A673 (cell line): ENCODE measurements at regions of chrX and their contacts with region 1.

Region 1: GRCh38 chrX:1380672-1381233 is 11.2 kb downstream of the SLC25A6 start:
- DNase-seq: peak; percentile 51
- H3K4me3 ChIP-seq: no peak overlapping the region
- H3K27ac ChIP-seq: no peak overlapping the region
- H3K4me1 ChIP-seq: no peaks in the 10 kb centered on the region
- H3K27me3 ChIP-seq: no peaks in the 10 kb centered on the region
- CTCF ChIP-seq: no peak

Region 2: DNA sequence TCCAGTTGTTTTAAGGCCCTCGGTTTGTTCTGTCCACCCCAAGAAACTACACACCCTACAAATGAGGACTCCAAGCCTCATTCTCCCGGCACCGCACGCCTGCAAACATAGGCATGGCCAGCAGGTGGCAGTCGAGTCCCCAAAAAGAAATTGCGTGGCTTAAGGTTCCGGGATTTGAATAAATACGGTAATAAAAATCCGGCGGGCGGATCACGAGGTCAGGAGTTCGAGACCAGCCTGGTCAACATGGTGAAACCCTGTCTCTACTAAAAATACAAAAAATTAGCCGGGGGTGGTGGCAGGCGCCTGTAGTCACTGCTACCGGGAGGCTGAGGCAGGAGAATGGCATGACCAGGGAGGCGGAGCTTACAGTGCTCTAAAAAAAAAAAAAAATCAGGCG is 133.9 kb before region 1 on chrX:
- CTCF ChIA-PET with region 1: no interaction called
- POLR2A ChIA-PET with region 1: no interaction called
- intact Hi-C with region 1: loop called (anchors 10 kb)
- DNase-seq: peak; percentile 85
- H3K4me3 ChIP-seq: no peak overlapping the region
- H3K27ac ChIP-seq: no peak overlapping the region
- H3K4me1 ChIP-seq: peaks cover 9% of the 10 kb centered on the region
- H3K27me3 ChIP-seq: no peaks in the 10 kb centered on the region
- CTCF ChIP-seq: peak; percentile 83